AG04450 (cell line): ENCODE measurements at regions of chr6 and their contacts with region 1.

Region 1: DNA sequence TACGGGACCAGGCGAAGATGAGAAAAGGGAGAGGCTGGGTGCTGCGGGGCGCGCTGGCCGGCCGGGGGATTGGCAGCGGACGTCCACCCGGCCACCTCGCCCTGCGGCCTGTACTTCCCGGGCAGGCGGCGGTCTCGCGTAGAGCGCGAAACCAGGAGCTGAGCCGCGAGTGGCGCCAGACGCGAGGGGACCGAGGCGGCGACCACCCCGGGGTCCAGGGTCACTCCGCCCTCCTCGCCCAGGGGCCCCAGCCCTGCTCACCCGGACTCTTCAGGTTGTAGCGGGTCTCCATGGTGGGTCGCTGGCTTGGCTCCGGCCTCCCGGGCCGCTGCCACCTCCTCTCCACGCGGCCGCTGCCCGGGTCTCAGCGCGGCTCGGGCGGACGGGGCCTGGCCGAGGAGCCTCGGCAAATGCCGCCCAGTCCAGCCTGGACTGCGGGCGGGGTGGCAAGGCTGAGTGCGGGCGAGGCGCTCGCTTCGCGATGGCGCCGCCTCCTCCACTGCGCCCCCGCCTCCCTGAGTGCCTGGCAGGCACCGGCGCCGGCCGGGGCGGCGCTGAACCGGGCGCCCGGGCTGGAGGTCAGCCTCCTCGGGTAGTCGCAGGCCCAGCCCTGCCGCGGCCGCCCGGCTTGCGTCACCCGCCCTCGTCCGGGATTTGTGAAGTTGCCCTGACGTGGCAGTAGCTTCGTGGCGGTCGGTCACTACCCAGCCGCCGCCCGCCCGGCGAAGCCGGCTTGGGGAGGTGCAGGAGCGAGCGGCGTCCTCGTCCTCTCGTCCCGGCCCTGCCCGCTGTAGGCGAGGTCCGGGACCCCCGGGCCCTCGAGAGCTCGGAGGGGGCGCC is at the start of gene UBE2J1:
- DNase-seq: peak; percentile 77
- H3K4me3 ChIP-seq: peak within 1 kb of the TSS; percentile 95
- H3K27ac ChIP-seq: peak within 1 kb of the TSS; percentile 89
- H3K27me3 ChIP-seq: no peaks in the 10 kb centered on the region
- CTCF ChIP-seq: no peak
- polyA plus RNA-seq, gene UBE2J1: 38.8 and 49.4 TPM in 2 replicates

Region 2: DNA sequence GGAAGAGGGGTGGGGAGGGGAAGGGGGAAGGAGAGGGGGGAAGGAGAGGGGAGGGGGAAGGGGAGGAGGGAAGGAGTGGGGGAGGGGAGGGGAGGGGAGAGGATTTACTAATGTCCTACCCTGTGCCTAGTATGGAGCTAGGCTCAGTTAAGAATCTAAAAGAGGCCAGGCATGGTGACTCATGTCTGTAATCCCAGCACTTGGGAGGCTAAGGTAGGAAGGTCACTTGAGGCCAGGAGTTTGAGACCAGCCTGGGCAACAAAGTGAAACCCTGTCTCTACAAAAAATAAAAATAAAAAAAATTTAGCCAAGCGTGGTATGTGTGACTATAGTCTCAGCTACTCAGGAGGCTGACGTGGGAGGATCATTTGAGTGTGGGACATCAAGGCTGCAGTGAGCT is 12.9 kb before region 1 on chr6:
- CTCF ChIA-PET with region 1: interaction called, 6 read pairs
- POLR2A ChIA-PET with region 1: interaction called, 10 read pairs
- DNase-seq: no peak
- H3K4me3 ChIP-seq: no peak overlapping the region
- H3K27ac ChIP-seq: no peak overlapping the region
- H3K27me3 ChIP-seq: no peaks in the 10 kb centered on the region
- CTCF ChIP-seq: no peak